ENCODE measurements at regions of chr14 and their contacts with region 1.

Region 1: GRCh38 chr14:22556990-22557623 is 31.9 kb downstream of the DAD1 start:
- DNase-seq: peak; percentile 76 to 95 (median 86)
- ATAC-seq: peak; percentile 84 to 89 (median 87)
- H3K4me3 ChIP-seq: peak overlapping the region in 10 of 12 donors; percentile 29 to 52 (median 42)
- H3K27ac ChIP-seq: peak overlapping the region in 11 of 12 donors; percentile 3 to 83 (median 55)
- H3K4me1 ChIP-seq: peaks cover 0 to 70% (median 30%) of the 10 kb centered on the region in 12 donors
- H3K27me3 ChIP-seq: no peaks in the 10 kb centered on the region
- CTCF ChIP-seq: peak in 10 of 12 donors; percentile 93 to 100 (median 98)
- POLR2A ChIP-seq: peak in 1 of 2 donors; percentile 22

Region 2: GRCh38 chr14:22314181-22314820 is 242.8 kb before region 1 on chr14:
- intact Hi-C with region 1: loop called in 1 of 10 experiments (anchors 10 kb)
- DNase-seq: no peak
- ATAC-seq: peak in 3 of 4 donors; percentile 55 to 82 (median 69)
- H3K4me3 ChIP-seq: no peak overlapping the region
- H3K27ac ChIP-seq: no peak overlapping the region
- H3K4me1 ChIP-seq: no peaks in the 10 kb centered on the region
- H3K27me3 ChIP-seq: no peaks in the 10 kb centered on the region
- CTCF ChIP-seq: peak; percentile 56 to 74 (median 66)
- POLR2A ChIP-seq: no peak

Region 3: DNA sequence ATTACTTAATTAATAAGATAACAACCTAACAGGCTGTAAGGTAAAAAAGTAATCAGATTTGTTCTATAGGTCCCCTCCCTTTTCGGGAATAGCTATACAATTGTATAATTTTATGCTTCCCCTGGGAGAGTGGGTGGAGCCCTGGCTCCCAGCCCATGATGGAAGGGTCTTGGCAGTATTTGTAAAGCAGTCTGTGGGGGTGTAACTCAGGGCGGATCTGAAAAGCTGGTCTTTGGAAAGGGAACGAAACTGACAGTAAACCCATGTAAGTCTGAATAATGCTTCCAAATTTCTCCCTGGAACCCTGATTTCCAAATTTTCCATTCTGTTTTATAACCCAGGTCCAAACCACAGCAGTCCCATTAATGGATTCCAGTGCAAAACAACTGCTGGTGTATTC is 78.4 kb before region 1 on chr14:
- intact Hi-C with region 1: loop called in 2 of 10 experiments (anchors 5 kb)
- DNase-seq: peak in 3 of 5 donors; percentile 40 to 57 (median 46)
- ATAC-seq: peak in 2 of 4 donors; percentile 61 to 70
- H3K4me3 ChIP-seq: no peak overlapping the region
- H3K27ac ChIP-seq: peak overlapping the region in 2 of 12 donors; percentile 30 to 51
- H3K4me1 ChIP-seq: peaks cover 10 to 88% (median 54%) of the 10 kb centered on the region in 12 donors
- H3K27me3 ChIP-seq: no peaks in the 10 kb centered on the region
- CTCF ChIP-seq: no peak
- POLR2A ChIP-seq: no peak

Region 4: DNA sequence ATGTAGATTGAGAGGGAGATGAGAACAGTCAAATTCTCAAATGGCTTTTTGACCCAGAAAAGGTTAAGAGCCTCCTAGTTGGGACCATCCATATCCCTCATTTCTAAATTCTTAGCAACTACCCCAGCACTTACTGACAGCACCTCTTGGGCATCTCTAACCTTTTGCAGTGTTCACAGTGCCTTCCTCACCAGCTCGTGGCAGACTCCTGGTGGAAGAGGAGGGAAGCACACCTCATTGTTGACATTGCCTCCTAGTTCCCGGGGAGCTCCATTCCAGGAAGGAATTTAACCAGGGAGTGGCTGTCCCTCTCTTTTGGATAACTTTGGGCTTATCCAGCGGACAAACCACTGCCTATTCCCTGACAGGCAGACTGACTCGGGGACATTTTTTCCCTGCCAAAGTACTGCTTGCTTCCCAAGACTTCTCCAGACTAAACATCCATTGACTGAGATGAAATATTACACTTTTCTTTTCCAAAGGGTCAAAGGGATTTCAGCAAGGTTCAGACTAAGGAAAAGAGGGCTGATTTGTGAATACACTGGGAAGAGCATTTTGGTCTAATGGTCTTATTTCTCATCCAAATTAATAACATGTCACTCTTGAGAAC is 96.0 kb after region 1 on chr14:
- intact Hi-C with region 1: loop called in 7 of 10 experiments (anchors 1 to 5 kb)
- DNase-seq: peak in 4 of 5 donors; percentile 31 to 53 (median 48)
- ATAC-seq: peak in 3 of 4 donors; percentile 81 to 89 (median 86)
- H3K4me3 ChIP-seq: no peak overlapping the region
- H3K27ac ChIP-seq: no peak overlapping the region
- H3K4me1 ChIP-seq: peaks cover 0 to 2% (median 0%) of the 10 kb centered on the region in 12 donors
- H3K27me3 ChIP-seq: no peaks in the 10 kb centered on the region
- CTCF ChIP-seq: peak; percentile 65 to 80 (median 70)
- POLR2A ChIP-seq: no peak

Region 5: DNA sequence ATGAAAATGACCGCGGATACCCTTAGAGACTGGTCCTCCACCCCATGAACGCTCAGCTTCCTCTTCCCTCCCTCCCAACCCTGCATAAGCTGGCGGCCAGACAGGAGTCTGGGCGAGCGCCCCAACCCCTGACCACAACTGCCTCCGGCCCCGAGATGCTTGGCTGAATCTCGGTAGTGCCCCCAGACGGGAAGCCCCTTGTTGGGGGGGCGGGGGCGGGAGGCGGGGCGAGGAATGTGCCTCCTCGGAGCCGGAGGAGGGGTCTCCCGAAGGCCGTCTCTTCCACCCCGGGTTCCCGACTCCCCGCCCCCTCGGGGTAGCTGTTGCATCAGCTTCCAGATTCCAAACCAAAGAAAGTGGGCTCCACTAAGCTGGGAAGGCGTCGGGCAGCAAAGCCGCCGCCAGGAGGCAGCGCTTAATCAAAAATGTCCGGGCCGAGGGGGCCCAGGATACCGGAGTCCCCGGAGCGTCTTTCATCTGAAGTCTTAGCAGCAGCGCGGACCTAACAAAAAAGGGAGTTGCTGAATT is 265.5 kb after region 1 on chr14:
- intact Hi-C with region 1: loop called in 6 of 10 experiments (anchors 5 to 10 kb)
- DNase-seq: peak; percentile 72 to 86 (median 79)
- ATAC-seq: peak; percentile 76 to 91 (median 85)
- H3K4me3 ChIP-seq: peak overlapping the region in 11 of 12 donors; percentile 14 to 59 (median 51)
- H3K27ac ChIP-seq: peak overlapping the region in 7 of 12 donors; percentile 11 to 70 (median 24)
- H3K4me1 ChIP-seq: peaks cover 0 to 54% (median 21%) of the 10 kb centered on the region in 12 donors
- H3K27me3 ChIP-seq: no peaks in the 10 kb centered on the region
- CTCF ChIP-seq: peak; percentile 71 to 98 (median 92)
- POLR2A ChIP-seq: no peak

Region 6: GRCh38 chr14:22852940-22853767 is 296.0 kb after region 1 on chr14:
- intact Hi-C with region 1: loop called in 8 of 10 experiments (anchors 2 to 10 kb)
- DNase-seq: peak; percentile 84 to 95 (median 87)
- ATAC-seq: peak; percentile 51 to 70 (median 66)
- H3K4me3 ChIP-seq: peak overlapping the region in 11 of 12 donors; percentile 13 to 69 (median 54)
- H3K27ac ChIP-seq: peak overlapping the region in 7 of 12 donors; percentile 27 to 68 (median 40)
- H3K4me1 ChIP-seq: peaks cover 3 to 51% (median 44%) of the 10 kb centered on the region in 12 donors
- H3K27me3 ChIP-seq: no peaks in the 10 kb centered on the region
- CTCF ChIP-seq: peak; percentile 74 to 97 (median 90)
- POLR2A ChIP-seq: no peak

Region 7: DNA sequence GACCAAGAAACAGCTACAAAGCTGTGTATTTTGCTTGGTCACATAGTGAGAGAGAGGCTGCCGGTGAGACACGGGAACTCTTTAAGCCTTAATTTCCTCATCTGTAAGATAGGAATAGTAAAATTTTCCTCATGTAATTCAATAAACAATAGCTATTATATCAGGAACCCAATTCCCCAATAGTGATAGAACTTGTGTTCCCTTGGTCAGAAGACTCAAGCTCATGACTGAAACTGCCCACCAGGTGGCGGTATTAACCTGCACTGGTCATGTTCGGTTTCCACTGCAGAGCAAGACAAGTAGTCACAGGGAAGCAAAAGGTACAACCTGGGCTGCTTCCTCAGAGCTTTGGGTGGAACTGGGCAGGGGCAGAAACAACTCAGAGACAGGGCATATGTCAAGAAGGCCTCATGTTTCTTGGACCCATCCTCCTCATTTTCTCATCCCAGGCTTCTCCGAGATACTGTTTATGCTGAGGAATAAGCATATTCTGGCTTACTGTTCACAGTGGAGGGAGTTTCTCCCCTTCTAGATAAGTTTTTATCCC is 429.5 kb after region 1 on chr14:
- intact Hi-C with region 1: loop called in 2 of 10 experiments (anchors 10 kb)
- DNase-seq: peak; percentile 82 to 88 (median 87)
- ATAC-seq: peak; percentile 35 to 52 (median 40)
- H3K4me3 ChIP-seq: no peak overlapping the region
- H3K27ac ChIP-seq: no peak overlapping the region
- H3K4me1 ChIP-seq: peaks cover 0 to 19% (median 8%) of the 10 kb centered on the region in 12 donors
- H3K27me3 ChIP-seq: peaks cover 0 to 8% (median 0%) of the 10 kb centered on the region in 9 donors
- CTCF ChIP-seq: peak; percentile 85 to 95 (median 92)
- POLR2A ChIP-seq: no peak